GM12878 (cell line): ENCODE measurements at regions of chr17 and their contacts with region 1.

Region 1: GRCh38 chr17:46154151-46154816 is 38.9 kb downstream of the KANSL1 start:
- DNase-seq: no peak
- ATAC-seq: no peak
- H3K4me3 ChIP-seq: no peak overlapping the region
- H3K27ac ChIP-seq: peak overlapping the region; percentile 29
- H3K4me1 ChIP-seq: peaks cover 90% of the 10 kb centered on the region
- H3K27me3 ChIP-seq: no peaks in the 10 kb centered on the region
- CTCF ChIP-seq: no peak
- EP300 ChIP-seq: no peak
- POLR2A ChIP-seq: no peak
- RAD21 ChIP-seq: no peak

Region 2: DNA sequence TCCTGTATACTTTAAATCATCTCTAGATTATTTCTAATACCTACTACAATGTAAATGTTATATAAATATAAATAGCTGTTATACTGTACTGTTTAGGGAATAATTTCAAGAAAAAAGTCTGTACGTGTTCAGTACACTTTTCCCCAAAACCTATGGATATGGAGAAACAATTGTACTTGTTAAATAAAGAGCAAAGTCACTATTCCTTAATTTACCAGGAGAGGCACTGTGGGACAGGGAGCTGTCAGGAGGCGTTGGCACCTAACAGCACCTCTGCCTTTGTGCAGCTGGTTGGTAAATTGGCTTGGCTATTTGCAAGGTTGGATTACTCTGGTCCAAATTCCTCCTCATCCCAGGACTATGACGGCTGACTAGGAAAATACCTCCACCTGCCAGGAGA is 342.2 kb before region 1 on chr17:
- CTCF ChIA-PET with region 1: no interaction called
- POLR2A ChIA-PET with region 1: no interaction called
- RAD21 ChIA-PET with region 1: no interaction called
- SMC1A ChIA-PET with region 1: no interaction called
- in situ Hi-C with region 1: no loop called
- intact Hi-C with region 1: no loop called
- DNase-seq: no peak
- ATAC-seq: no peak
- H3K4me3 ChIP-seq: no peak overlapping the region
- H3K27ac ChIP-seq: no peak overlapping the region
- H3K4me1 ChIP-seq: no peaks in the 10 kb centered on the region
- H3K27me3 ChIP-seq: no peaks in the 10 kb centered on the region
- CTCF ChIP-seq: 0 out of 6 replicates have a peak, but pooled peaks of 1 of the 3 experiments have one; percentile 1
- EP300 ChIP-seq: no peak
- POLR2A ChIP-seq: no peak
- RAD21 ChIP-seq: no peak

Region 3: GRCh38 chr17:46072998-46073397 is 81.3 kb before region 1 on chr17:
- CTCF ChIA-PET with region 1: no interaction called
- POLR2A ChIA-PET with region 1: no interaction called
- RAD21 ChIA-PET with region 1: no interaction called
- SMC1A ChIA-PET with region 1: no interaction called
- in situ Hi-C with region 1: no loop called
- intact Hi-C with region 1: no loop called
- DNase-seq: no peak
- ATAC-seq: no peak
- H3K4me3 ChIP-seq: no peak overlapping the region
- H3K27ac ChIP-seq: no peak overlapping the region
- H3K4me1 ChIP-seq: no peaks in the 10 kb centered on the region
- H3K27me3 ChIP-seq: no peaks in the 10 kb centered on the region
- CTCF ChIP-seq: no peak
- EP300 ChIP-seq: no peak
- POLR2A ChIP-seq: no peak
- RAD21 ChIP-seq: no peak

Region 4: DNA sequence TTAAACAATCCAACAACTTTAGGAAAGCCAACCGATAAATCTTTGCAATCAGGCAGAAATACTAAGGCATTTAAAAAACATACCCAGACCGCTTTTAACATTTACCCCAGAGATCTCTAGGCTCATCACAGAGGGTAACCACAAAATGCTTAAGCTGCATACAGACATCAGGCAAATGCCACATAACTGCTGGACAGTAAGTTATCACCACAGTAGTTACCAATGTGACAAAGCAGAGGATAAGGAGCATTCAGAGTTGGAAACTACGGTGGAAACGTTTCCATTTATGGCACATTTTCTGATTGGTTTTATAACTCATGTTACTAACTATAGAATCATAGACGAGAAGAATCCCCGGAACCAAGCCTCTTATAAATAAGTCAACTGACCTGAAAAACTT is 38.6 kb before region 1 on chr17:
- CTCF ChIA-PET with region 1: interaction called, 14 read pairs
- POLR2A ChIA-PET with region 1: interaction called, 7 read pairs
- RAD21 ChIA-PET with region 1: interaction called, 12 read pairs
- SMC1A ChIA-PET with region 1: interaction called, 113 read pairs
- in situ Hi-C with region 1: no loop called
- intact Hi-C with region 1: no loop called
- DNase-seq: no peak
- ATAC-seq: no peak
- H3K4me3 ChIP-seq: no peak overlapping the region
- H3K27ac ChIP-seq: no peak overlapping the region
- H3K4me1 ChIP-seq: peaks cover 17% of the 10 kb centered on the region
- H3K27me3 ChIP-seq: no peaks in the 10 kb centered on the region
- CTCF ChIP-seq: no peak
- EP300 ChIP-seq: no peak
- POLR2A ChIP-seq: no peak
- RAD21 ChIP-seq: no peak

Region 5: DNA sequence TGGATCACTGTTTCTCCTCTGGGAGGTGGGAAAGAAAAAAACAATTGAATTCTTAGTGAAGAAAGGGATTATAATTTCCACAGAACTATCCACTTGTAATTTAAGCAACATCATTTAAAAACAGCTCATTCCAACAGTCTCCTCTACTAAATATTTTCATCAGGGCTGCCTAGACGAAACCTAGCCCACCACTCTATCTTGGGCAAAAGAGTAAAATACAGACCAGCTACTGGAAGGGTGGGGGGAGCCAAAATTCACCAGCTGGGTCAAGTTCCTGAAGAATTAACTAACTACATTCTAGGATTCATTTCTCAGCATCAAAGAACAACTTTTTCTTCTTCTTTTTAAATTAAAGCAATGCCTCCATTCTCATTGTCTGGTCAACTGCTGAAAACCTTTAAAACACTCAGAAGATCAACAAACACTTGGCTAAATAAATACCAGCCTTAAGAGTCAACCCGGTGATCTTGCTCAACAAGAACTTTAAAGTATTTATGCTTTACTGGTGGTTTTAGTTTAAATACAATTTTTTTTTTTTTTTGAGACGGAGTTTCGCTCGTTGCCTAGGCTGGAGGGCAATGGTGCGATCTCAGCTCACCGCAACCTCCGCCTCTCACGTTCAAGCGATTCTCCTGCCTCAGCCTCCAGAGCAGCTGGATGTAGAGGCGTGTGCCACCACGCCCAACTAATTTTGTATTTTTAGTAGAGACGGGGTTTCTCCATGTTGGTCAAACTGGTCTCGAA is 13.7 kb after region 1 on chr17:
- CTCF ChIA-PET with region 1: interaction called, 11 read pairs
- POLR2A ChIA-PET with region 1: interaction called, 6 read pairs
- RAD21 ChIA-PET with region 1: interaction called, 4 read pairs
- SMC1A ChIA-PET with region 1: interaction called, 478 read pairs
- in situ Hi-C with region 1: no loop called
- intact Hi-C with region 1: no loop called
- DNase-seq: no peak
- ATAC-seq: no peak
- H3K4me3 ChIP-seq: no peak overlapping the region
- H3K27ac ChIP-seq: no peak overlapping the region
- H3K4me1 ChIP-seq: no peaks in the 10 kb centered on the region
- H3K27me3 ChIP-seq: no peaks in the 10 kb centered on the region
- CTCF ChIP-seq: no peak
- EP300 ChIP-seq: no peak
- POLR2A ChIP-seq: no peak
- RAD21 ChIP-seq: no peak

Region 6: DNA sequence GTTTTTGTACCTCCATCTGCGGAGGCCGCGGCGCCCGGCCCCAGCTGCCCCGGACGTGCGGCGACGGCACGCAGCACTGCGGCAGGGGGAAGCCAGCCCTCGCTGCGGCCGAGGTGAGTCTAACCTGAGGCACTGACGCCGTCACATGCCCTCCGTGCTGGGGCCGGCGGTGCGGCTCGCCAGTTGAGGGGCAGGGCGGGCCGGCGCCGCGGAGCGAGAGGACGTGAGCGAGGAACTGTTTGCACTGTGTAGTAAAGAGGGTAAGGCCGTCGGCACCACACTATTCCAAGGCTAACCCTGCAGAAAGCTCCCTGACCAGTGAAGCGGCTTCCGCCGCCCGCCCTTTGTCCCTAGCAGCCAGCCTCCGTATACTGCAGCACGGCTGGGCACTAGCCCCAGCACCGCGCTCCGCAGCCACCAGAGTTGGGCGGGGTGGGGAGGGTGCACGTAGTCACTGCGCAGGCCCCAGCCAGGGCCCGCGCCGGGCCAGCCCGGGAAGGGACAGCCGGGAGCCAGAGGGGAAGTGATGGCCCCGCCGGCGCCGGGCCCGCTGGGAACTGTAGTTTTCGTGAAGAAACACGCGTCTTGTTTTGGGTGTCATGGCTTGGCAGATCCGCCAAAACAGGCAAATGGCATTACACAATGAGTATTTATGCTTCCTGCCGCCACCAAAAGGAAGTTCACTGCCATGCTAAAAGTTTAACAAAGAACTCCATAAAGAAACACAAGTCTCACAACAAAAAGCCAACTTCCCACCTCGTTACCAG is 39.5 kb after region 1 on chr17:
- CTCF ChIA-PET with region 1: interaction called, 7 read pairs
- POLR2A ChIA-PET with region 1: interaction called, 4 read pairs
- RAD21 ChIA-PET with region 1: interaction called, 102 read pairs
- SMC1A ChIA-PET with region 1: interaction called, 478 read pairs
- in situ Hi-C with region 1: no loop called
- intact Hi-C with region 1: no loop called
- DNase-seq: peak; percentile 88
- ATAC-seq: peak; percentile 90
- H3K4me3 ChIP-seq: peak overlapping the region; percentile 87
- H3K27ac ChIP-seq: peak overlapping the region; percentile 98
- H3K4me1 ChIP-seq: peaks cover 32% of the 10 kb centered on the region
- H3K27me3 ChIP-seq: no peaks in the 10 kb centered on the region
- CTCF ChIP-seq: peak in 2 of 3 experiments; percentile 13 to 26; a peak in 3 of 6 replicates
- EP300 ChIP-seq: peak in 1 of 2 experiments; percentile 7; a peak in 1 of 4 replicates
- POLR2A ChIP-seq: peak; percentile 85
- RAD21 ChIP-seq: no peak